SK-N-SH (cell line): ENCODE measurements at regions of chr12 and their contacts with region 1.

Region 1: DNA sequence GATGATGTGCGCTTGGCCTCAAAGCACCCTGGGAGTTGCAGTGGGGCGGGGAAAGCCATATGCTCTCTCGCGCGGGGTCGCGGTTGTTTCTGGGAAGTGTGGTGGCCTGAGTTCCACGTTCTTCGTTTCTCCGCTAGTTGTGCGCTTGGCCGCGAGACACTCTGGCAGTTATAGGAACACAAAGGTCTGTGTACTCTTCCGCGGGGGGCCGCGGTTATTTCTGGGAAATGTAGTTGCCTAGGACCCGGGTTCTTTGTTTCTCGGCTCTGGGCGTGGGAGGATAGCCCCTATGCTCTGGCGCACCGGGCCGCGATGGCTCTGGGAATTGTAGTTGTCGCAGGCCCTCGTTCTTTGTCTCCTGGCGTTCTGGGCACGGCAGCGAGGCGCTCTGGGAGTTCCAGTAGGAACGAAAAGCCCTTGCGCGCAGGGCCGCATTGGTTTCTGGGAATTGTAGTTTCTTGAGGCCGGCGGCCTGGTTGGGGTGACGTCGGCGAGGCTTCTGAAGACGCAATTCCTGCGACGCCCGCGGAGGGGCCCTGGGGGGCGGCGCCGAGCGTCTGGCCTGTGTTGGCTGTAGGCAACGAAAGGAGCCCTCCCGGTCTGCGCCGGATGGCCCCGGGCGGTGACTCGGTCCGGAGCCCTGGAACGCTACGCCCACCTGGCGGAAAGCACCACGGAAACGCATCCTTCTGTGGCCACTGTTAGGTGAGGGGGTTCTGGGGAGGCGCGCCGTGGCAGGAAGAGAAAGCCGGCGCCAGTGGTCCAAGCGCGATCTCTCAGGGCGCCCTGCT is at the start of gene ZNF140:
- DNase-seq: peak; percentile 87
- H3K4me3 ChIP-seq: peak within 1 kb of the TSS; percentile 74 to 92
- H3K27ac ChIP-seq: peak within 1 kb of the TSS; percentile 96 to 98
- H3K4me1 ChIP-seq: peaks cover 0 to 8% of the 10 kb centered on the region in 2 experiments; a peak in 1 of 4 replicates
- H3K27me3 ChIP-seq: no peaks in the 10 kb centered on the region
- CTCF ChIP-seq: peak; percentile 9; the same call in 1 of the 2 replicates
- EP300 ChIP-seq: no peak
- RAD21 ChIP-seq: peak; percentile 15; the same call in 1 of the 2 replicates
- polyA plus RNA-seq, gene ZNF140: 5.1 and 7.9 TPM in 2 replicates

Region 2: GRCh38 chr12:133130038-133130807 is 49.7 kb after region 1 on chr12 and contains the starts of genes ZNF10 and ZNF891:
- CTCF ChIA-PET with region 1: no interaction called
- POLR2A ChIA-PET with region 1: interaction called, 18 read pairs
- DNase-seq: peak; percentile 95
- H3K4me3 ChIP-seq: peak within 1 kb of the TSS; percentile 78 to 84
- H3K27ac ChIP-seq: peak within 1 kb of the TSS; percentile 85 to 94
- H3K4me1 ChIP-seq: no peaks in the 10 kb centered on the region; a peak in 1 of 4 replicates
- H3K27me3 ChIP-seq: no peaks in the 10 kb centered on the region
- CTCF ChIP-seq: no peak
- EP300 ChIP-seq: no peak
- RAD21 ChIP-seq: no peak
- polyA plus RNA-seq, gene ZNF10: 4.0 and 4.5 TPM in 2 replicates
- polyA plus RNA-seq, gene ZNF891: 0.33 and 0.50 TPM in 2 replicates